Activated CD8-positive, alpha-beta T cell treated with anti-CD3 and anti-CD28 coated beads for 36 hours (primary cell): ENCODE measurements at regions of chr3 and their contacts with region 1.

Region 1: DNA sequence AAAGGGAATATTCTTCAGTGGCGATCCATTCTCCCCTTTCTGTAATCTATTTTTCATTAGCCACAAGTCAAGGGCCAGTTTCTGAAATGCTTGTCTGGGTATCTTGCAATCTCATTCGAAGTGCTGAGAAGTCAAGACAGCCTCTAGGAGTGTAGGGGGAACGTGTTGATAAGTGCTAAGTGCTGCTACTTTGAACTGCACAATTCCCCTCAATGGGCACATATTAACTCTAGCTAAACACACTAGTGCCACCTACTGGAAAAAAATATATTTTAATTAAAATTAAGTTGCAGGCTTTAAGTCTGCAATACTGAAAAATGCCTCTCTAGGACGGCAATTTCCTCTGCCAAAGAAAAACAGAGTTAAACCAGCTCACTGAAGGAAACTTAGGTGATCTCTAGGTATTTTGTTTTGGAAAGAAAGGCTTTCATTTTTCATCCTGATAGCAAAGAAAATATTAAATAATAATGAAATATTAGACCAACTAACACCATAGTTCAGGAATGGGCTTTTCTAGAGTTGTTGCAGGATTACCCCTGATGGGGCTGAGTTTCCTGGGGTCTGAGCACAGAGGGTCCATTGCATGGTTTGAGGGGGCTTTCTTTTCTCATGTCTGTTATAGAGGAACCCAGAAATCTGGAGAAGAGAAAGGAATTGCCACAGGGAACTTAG is 181.9 kb upstream of the KBTBD8 start:
- DNase-seq: no peak
- ATAC-seq: peak; percentile 61
- H3K4me3 Mint-ChIP-seq: no peak overlapping the region
- H3K27ac Mint-ChIP-seq: no peak overlapping the region
- H3K4me1 Mint-ChIP-seq: no peaks in the 10 kb centered on the region
- H3K27me3 Mint-ChIP-seq: no peaks in the 10 kb centered on the region
- CTCF ChIP-seq: peak; percentile 79

Region 2: GRCh38 chr3:66748175-66748876 is 67.9 kb before region 1 on chr3:
- CTCF ChIA-PET with region 1: no interaction called
- POLR2A ChIA-PET with region 1: no interaction called
- intact Hi-C with region 1: no loop called
- DNase-seq: no peak
- ATAC-seq: no peak
- H3K4me3 Mint-ChIP-seq: no peak overlapping the region
- H3K27ac Mint-ChIP-seq: no peak overlapping the region
- H3K4me1 Mint-ChIP-seq: no peaks in the 10 kb centered on the region
- H3K27me3 Mint-ChIP-seq: peaks cover 4% of the 10 kb centered on the region
- CTCF ChIP-seq: no peak

Region 3: GRCh38 chr3:66803206-66803605 is 13.0 kb before region 1 on chr3:
- CTCF ChIA-PET with region 1: interaction called, 26 read pairs
- POLR2A ChIA-PET with region 1: no interaction called
- intact Hi-C with region 1: no loop called
- DNase-seq: no peak
- ATAC-seq: no peak
- H3K4me3 Mint-ChIP-seq: no peak overlapping the region
- H3K27ac Mint-ChIP-seq: no peak overlapping the region
- H3K4me1 Mint-ChIP-seq: peaks cover 7% of the 10 kb centered on the region
- H3K27me3 Mint-ChIP-seq: peaks cover 13% of the 10 kb centered on the region
- CTCF ChIP-seq: no peak

Region 4: DNA sequence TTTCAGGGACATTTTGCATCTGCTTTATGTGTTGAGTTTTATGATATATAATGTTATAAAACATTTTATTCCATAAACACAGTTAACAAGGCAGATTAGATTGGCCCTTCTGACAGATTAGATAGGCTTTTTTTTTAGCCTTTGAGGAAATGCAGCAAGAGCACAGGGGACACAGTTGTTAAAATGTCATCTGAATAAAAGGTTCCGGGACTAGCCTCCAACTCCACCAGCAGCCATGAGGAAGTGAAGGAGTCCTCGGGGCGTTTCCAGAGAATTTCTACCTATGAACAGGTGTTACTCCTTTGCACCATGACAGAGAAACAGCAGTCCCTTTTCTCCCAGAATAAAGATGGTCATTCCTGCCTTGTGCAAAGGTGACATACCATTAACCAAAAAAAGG is 14.1 kb after region 1 on chr3:
- CTCF ChIA-PET with region 1: interaction called, 12 read pairs
- POLR2A ChIA-PET with region 1: no interaction called
- intact Hi-C with region 1: no loop called
- DNase-seq: no peak
- ATAC-seq: no peak
- H3K4me3 Mint-ChIP-seq: no peak overlapping the region
- H3K27ac Mint-ChIP-seq: no peak overlapping the region
- H3K4me1 Mint-ChIP-seq: no peaks in the 10 kb centered on the region
- H3K27me3 Mint-ChIP-seq: peaks cover 5% of the 10 kb centered on the region
- CTCF ChIP-seq: no peak

Region 5: GRCh38 chr3:67389176-67389575 is 573.0 kb after region 1 on chr3:
- CTCF ChIA-PET with region 1: no interaction called
- POLR2A ChIA-PET with region 1: no interaction called
- intact Hi-C with region 1: no loop called
- DNase-seq: no peak
- ATAC-seq: no peak
- H3K4me3 Mint-ChIP-seq: no peak overlapping the region
- H3K27ac Mint-ChIP-seq: no peak overlapping the region
- H3K4me1 Mint-ChIP-seq: peaks cover 26% of the 10 kb centered on the region
- H3K27me3 Mint-ChIP-seq: no peaks in the 10 kb centered on the region
- CTCF ChIP-seq: no peak